Heart right ventricle (tissue), 16 donors: ENCODE measurements at regions of chr12 and their contacts with region 1.

Region 1: DNA sequence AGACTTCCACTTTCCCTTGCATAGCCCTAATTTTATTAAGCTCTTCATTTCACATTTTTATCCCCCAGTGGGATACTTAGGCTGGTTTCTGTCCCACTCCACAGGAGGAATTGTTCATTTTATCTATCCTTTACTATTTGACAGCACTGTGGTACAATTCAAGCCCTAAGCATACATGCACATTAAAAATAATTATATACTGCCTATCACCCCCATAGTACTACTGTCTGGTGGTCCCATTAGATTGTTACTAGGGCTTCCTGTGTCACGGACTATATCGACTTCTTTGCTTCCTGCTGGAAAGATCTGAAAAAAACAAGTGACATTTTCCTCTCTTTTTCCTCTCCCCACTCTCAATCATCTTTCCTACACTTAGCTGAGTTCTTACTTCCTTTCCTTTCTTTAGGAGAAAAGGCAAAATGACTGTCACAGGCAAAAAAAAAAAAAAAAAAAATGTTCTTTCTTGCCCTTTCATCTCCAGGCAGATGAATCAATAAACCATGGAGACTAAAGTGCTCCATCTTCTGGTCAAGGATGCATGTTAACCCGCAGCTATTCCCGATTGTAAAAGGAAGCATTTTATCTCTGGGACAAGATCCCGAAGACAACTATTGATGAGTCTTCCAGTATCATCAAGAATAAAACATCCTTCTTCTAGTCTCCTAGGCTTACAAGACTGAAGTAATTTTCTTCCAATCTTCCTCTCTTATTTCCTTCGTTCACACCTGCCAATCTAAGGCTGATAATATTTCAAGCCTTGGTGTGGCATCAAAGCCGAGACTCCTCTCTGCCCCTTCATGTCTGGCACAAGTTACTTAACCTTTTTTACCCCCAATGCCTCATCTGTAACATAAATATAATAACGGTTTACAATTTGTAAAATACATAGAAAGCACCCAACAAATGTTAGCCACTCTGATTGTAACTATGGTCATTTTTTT is 94.4 kb upstream of the PLEKHG7 start:
- DNase-seq: peak in 1 of 2 donors; percentile 13
- ATAC-seq: peak in 4 of 8 donors; percentile 12 to 56 (median 44)
- H3K4me3 ChIP-seq: no peak overlapping the region
- H3K27ac ChIP-seq: no peak overlapping the region
- H3K4me1 ChIP-seq: peaks cover 0 to 31% (median 0%) of the 10 kb centered on the region in 9 donors
- H3K27me3 ChIP-seq: no peaks in the 10 kb centered on the region
- CTCF ChIP-seq: peak; percentile 8 to 70 (median 52)

Region 2: DNA sequence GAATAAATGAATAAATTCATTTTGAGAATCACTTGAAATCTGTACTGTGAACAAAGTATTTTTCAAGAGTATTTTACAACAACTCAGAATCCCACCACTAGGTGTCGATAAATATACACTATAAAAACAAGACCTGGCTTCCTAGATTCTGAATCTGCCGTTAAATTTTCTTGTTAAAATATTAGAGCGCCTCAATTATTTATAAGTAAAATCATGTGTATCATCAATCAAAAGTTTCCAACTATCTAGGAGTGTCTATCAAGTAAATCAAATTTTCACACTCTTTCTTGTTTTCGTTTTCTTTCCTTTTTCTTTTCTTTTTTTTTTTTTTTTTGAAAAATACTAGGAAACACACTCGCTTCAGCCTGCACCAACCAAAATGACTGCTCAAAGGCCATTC is 1246.6 kb before region 1 on chr12:
- intact Hi-C with region 1: loop called in 1 of 10 experiments (anchors 1 kb)
- DNase-seq: no peak
- ATAC-seq: peak in 3 of 8 donors; percentile 34 to 58 (median 39)
- H3K4me3 ChIP-seq: no peak overlapping the region
- H3K27ac ChIP-seq: no peak overlapping the region
- H3K4me1 ChIP-seq: peaks cover 0 to 8% (median 0%) of the 10 kb centered on the region in 9 donors
- H3K27me3 ChIP-seq: no peaks in the 10 kb centered on the region
- CTCF ChIP-seq: peak; percentile 36 to 81 (median 71)

Region 3: GRCh38 chr12:92561543-92561899 is 46.9 kb before region 1 on chr12:
- intact Hi-C with region 1: no loop called
- DNase-seq: peak in 1 of 2 donors; percentile 74
- ATAC-seq: peak; percentile 76 to 96 (median 89)
- H3K4me3 ChIP-seq: no peak overlapping the region
- H3K27ac ChIP-seq: peak overlapping the region in 9 of 10 donors; percentile 29 to 68 (median 45)
- H3K4me1 ChIP-seq: peaks cover 0 to 44% (median 24%) of the 10 kb centered on the region in 9 donors
- H3K27me3 ChIP-seq: no peaks in the 10 kb centered on the region
- CTCF ChIP-seq: no peak

Region 4: GRCh38 chr12:92656911-92657310 is 48.5 kb after region 1 on chr12:
- intact Hi-C with region 1: no loop called
- DNase-seq: no peak
- ATAC-seq: no peak
- H3K4me3 ChIP-seq: no peak overlapping the region
- H3K27ac ChIP-seq: no peak overlapping the region
- H3K4me1 ChIP-seq: peaks cover 0 to 5% (median 0%) of the 10 kb centered on the region in 9 donors
- H3K27me3 ChIP-seq: no peaks in the 10 kb centered on the region
- CTCF ChIP-seq: no peak